Right ventricle myocardium inferior (tissue), 1 donor: ENCODE measurements at regions of chr16 and their contacts with region 1.

Region 1: DNA sequence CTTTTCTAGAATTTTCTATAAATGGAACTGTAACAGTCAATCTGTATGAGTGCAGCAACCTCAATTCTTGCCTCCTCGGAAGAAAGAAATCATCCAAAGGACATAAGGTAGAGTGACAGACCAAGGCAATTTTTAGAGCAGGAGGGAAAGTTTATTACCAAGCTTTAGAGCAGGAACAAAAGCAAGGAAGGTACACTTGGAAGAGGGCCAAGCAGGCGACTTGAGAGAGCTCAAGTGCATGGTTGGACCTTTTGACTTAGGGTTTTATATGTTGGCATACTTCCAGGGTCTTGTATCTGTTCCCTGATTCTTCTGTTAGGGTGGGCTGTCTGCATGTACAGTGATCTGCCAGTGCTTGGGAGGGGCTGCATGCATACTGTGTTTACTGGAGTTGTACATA is 50.3 kb downstream of the SCNN1G start:
- DNase-seq: no peak
- ATAC-seq: no peak

Region 2: DNA sequence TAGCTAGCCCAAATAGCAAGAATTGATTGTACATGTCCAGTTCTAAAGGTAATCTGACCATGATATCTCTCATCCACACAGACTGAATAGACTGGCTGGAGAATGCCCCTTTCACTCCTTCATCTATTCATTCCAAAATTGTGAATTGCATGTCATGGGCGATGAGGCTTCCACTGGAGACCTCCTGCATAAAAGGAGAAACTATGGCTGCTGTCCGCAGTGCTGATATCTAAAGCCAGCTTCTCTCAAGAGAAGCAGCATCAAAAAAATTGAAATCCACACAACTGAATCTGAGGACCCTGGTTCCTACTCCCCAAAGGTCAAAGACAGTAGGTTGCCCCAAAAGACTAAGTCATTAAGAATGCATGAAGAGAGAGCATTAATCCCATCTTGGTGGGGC is 58.2 kb before region 1 on chr16:
- intact Hi-C with region 1: no loop called
- DNase-seq: no peak
- ATAC-seq: no peak

Region 3: GRCh38 chr16:23195366-23195978 is 37.3 kb before region 1 on chr16:
- intact Hi-C with region 1: no loop called
- DNase-seq: no peak
- ATAC-seq: peak; percentile 58

Region 4: GRCh38 chr16:23256440-23256839 is 23.6 kb after region 1 on chr16:
- intact Hi-C with region 1: loop called (anchors 1 kb)
- DNase-seq: no peak
- ATAC-seq: no peak

Region 5: GRCh38 chr16:23557779-23558702 is 325.2 kb after region 1 on chr16:
- intact Hi-C with region 1: no loop called
- DNase-seq: peak; percentile 75
- ATAC-seq: peak; percentile 1